Dorsolateral prefrontal cortex (tissue), 120 donors: ENCODE measurements at regions of chr17 and their contacts with region 1.

Region 1: GRCh38 chr17:39393736-39394135 is 7.7 kb downstream of the FBXL20 start:
- DNase-seq: no peak
- H3K4me3 ChIP-seq: no peak overlapping the region
- H3K27ac ChIP-seq: no peak overlapping the region
- H3K27me3 ChIP-seq: no peaks in the 10 kb centered on the region
- CTCF ChIP-seq: peak in 19 of 56 donors; percentile 8 to 35 (median 21)

Region 2: GRCh38 chr17:39026980-39027451 is 366.7 kb before region 1 on chr17:
- intact Hi-C with region 1: no loop called
- DNase-seq: peak in 4 of 10 donors; percentile 29 to 50 (median 42)
- H3K4me3 ChIP-seq: peak overlapping the region in 58 of 59 donors; percentile 14 to 70 (median 52)
- H3K27ac ChIP-seq: peak overlapping the region in 3 of 59 donors; percentile 18 to 53 (median 31)
- H3K27me3 ChIP-seq: peaks cover 0 to 13% (median 0%) of the 10 kb centered on the region in 45 donors
- CTCF ChIP-seq: no peak

Region 3: DNA sequence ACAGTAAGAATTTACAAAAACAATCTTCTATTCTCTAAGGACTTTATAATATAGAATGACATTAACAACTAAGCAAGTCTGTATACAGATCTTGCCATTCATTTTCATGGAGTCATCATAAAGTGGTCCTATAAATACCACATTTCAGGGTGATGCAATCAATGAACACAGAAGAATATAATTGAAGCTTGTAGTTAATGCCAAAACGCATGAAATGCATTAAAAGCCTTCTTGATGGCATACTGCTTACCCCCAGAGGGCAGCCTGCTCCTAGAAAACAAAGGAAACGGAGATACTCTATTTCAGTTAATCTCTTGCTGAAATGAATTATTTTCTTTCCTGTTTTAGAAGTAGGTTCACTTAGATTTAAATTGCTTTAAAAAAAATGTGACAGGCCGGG is 122.8 kb before region 1 on chr17:
- intact Hi-C with region 1: loop called in 1 of 2 experiments (anchors 10 kb)
- DNase-seq: no peak
- H3K4me3 ChIP-seq: no peak overlapping the region
- H3K27ac ChIP-seq: no peak overlapping the region
- H3K27me3 ChIP-seq: no peaks in the 10 kb centered on the region
- CTCF ChIP-seq: peak in 36 of 56 donors; percentile 12 to 66 (median 38)